Activated naive CD4-positive, alpha-beta T cell treated with anti-CD3 and anti-CD28 coated beads for 36 hours (primary cell): ENCODE measurements at regions of chr2 and their contacts with region 1.

Region 1: DNA sequence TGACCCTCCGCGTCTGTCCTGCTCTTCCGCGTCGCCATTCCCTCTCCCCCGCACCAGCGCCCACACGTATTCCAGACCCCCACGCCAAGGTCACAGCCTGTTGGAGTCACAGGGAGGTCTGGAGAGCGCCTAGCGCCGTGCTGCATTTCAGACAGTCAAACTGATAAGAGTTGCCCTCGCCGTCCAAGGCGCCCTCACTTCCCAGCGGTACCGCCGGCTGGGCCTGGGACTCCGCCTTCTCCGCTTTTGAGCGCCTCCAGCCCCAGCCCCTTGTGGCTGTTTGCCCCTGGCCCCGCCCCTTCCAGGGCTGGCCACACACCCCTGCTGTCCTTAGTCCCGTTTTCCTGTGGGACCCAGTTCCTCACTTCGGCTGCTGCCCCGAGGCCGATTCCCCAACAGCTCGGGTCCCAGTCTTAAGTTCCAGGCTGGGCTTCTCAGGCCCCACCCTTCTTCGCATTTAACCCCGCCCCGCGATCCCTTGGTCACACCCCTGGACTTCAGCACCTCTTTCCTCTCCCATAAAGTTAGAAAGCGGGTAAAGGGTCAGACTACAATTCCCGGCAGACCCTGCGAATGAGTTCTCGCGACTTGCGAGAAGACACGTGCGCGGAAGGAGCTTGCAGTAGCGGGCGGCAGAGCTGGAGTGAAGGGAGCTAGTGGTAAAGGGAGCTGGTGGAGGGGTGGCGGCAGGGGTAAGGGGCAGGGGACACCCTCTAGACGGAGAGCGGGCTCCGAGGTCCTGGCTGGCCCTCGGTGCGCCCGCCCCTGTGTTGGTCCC is at the start of gene GMPPA:
- DNase-seq: peak; percentile 98
- H3K4me3 Mint-ChIP-seq: peak within 1 kb of the TSS; percentile 91
- H3K27ac Mint-ChIP-seq: peak within 1 kb of the TSS; percentile 39
- H3K4me1 Mint-ChIP-seq: peaks cover 28% of the 10 kb centered on the region
- H3K27me3 Mint-ChIP-seq: peaks cover 43% of the 10 kb centered on the region
- total RNA-seq, gene GMPPA: 25.2 to 28.4 TPM

Region 2: GRCh38 chr2:219229305-219230058 is 269.0 kb before region 1 on chr2 and contains the starts of genes ANKZF1 and ATG9A:
- CTCF ChIA-PET with region 1: no interaction called
- intact Hi-C with region 1: loop called (anchors 1 kb)
- DNase-seq: peak; percentile 99
- H3K4me3 Mint-ChIP-seq: peak within 1 kb of the TSS; percentile 96
- H3K27ac Mint-ChIP-seq: peak within 1 kb of the TSS; percentile 97
- H3K4me1 Mint-ChIP-seq: peaks cover 48% of the 10 kb centered on the region
- H3K27me3 Mint-ChIP-seq: no peaks in the 10 kb centered on the region
- total RNA-seq, gene ANKZF1: 87.7 to 88.5 TPM
- total RNA-seq, gene ATG9A: 26.0 to 27.7 TPM

Region 3: GRCh38 chr2:219441451-219442255 is 56.8 kb before region 1 on chr2:
- CTCF ChIA-PET with region 1: interaction called, 5 read pairs
- intact Hi-C with region 1: loop called (anchors 2 kb)
- DNase-seq: peak; percentile 65
- H3K4me3 Mint-ChIP-seq: peak overlapping the region; percentile 65
- H3K27ac Mint-ChIP-seq: no peak overlapping the region
- H3K4me1 Mint-ChIP-seq: peaks cover 12% of the 10 kb centered on the region
- H3K27me3 Mint-ChIP-seq: peaks cover 6% of the 10 kb centered on the region

Region 4: GRCh38 chr2:219509780-219510511 is 11.5 kb after region 1 on chr2:
- CTCF ChIA-PET with region 1: interaction called, 27 read pairs
- intact Hi-C with region 1: loop called (anchors 1 kb)
- DNase-seq: peak; percentile 68
- H3K4me3 Mint-ChIP-seq: peak overlapping the region; percentile 26
- H3K27ac Mint-ChIP-seq: no peak overlapping the region
- H3K4me1 Mint-ChIP-seq: peaks cover 25% of the 10 kb centered on the region
- H3K27me3 Mint-ChIP-seq: peaks cover 41% of the 10 kb centered on the region

Region 5: DNA sequence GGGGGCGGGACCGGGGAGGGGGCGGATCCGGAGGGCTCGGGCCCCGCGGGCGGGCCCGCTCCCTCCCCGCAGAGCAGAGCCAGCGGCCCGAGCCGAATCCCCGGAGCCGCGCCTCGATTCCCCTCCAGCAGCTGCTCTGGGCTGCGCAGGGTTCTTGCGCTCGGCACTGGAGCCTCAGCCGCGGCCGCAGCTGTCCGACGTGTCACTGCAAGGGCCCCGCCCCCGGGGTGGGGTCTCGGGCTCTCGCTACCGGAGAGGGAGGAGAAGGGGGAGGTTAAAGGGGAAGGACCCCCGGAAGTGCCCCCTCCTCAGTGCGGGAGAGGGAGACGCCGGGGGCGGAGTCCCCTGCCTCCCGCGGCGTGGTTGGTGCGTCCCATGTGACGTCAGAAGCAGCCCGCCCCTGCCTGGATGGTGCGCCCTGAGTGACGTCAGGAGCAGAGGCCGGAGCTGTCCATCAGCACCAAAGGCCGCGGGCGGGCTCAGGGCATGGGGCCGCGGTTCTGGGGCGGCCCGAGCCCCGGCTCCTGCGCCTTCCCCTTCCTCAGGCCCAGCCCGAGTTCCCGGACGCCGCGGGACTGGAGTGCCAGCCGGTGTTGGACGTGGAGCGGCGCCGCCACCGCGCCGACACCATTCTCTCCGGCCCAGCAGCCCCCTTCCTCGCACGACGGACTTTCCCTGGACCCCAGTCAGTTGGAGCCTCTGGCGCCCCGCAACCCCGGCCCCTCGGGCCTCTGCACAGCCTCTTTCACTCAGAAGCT is 45.3 kb after region 1 on chr2 and contains the starts of genes CHPF and TMEM198:
- CTCF ChIA-PET with region 1: interaction called, 26 read pairs
- intact Hi-C with region 1: loop called (anchors 1 kb)
- DNase-seq: peak; percentile 97
- H3K4me3 Mint-ChIP-seq: peak within 1 kb of the TSS; percentile 79
- H3K27ac Mint-ChIP-seq: no peak within 1 kb of the TSS
- H3K4me1 Mint-ChIP-seq: peaks cover 20% of the 10 kb centered on the region
- H3K27me3 Mint-ChIP-seq: peaks cover 8% of the 10 kb centered on the region
- total RNA-seq, gene CHPF: 8.5 to 9.0 TPM
- total RNA-seq, gene TMEM198: 0.86 to 1.1 TPM

Region 6: GRCh38 chr2:219642465-219643080 is 144.1 kb after region 1 on chr2:
- CTCF ChIA-PET with region 1: interaction called, 9 read pairs
- intact Hi-C with region 1: loop called (anchors 1 kb)
- DNase-seq: peak; percentile 95
- H3K4me3 Mint-ChIP-seq: no peak overlapping the region
- H3K27ac Mint-ChIP-seq: no peak overlapping the region
- H3K4me1 Mint-ChIP-seq: peaks cover 5% of the 10 kb centered on the region
- H3K27me3 Mint-ChIP-seq: peaks cover 6% of the 10 kb centered on the region

Region 7: DNA sequence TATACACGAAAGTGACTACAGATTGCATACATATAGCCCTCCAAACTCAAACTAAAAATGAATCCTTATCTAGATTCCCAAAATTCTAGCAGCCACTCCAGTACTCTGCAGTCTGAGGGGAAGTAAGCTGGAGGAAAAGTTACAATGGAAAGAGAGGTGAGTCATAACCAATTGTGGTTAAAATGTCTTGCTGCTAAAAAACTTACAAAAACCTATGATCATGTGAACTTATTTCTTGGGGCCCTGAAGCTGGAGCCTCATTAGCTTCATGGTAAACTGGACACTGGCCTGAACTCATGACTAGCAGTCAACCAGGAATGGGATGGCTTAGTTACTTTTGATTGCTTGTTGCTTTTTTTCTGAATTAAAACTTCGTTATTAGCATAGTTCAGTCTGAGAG is 304.8 kb after region 1 on chr2:
- CTCF ChIA-PET with region 1: no interaction called
- intact Hi-C with region 1: no loop called
- DNase-seq: no peak
- H3K4me3 Mint-ChIP-seq: no peak overlapping the region
- H3K27ac Mint-ChIP-seq: no peak overlapping the region
- H3K4me1 Mint-ChIP-seq: no peaks in the 10 kb centered on the region
- H3K27me3 Mint-ChIP-seq: peaks cover 2% of the 10 kb centered on the region